ENCODE measurements at regions of chr1 and their contacts with region 1.

Region 1: GRCh38 chr1:153990468-153991150 is at the start of gene RPS27:
- DNase-seq: peak; percentile 84
- ATAC-seq: peak; percentile 83
- H3K4me3 Mint-ChIP-seq: peak within 1 kb of the TSS; percentile 93
- H3K27ac Mint-ChIP-seq: peak within 1 kb of the TSS; percentile 98
- H3K4me1 Mint-ChIP-seq: peaks cover 39% of the 10 kb centered on the region
- H3K27me3 Mint-ChIP-seq: no peaks in the 10 kb centered on the region
- total RNA-seq, gene RPS27: 3,346 to 3,734 TPM

Region 2: DNA sequence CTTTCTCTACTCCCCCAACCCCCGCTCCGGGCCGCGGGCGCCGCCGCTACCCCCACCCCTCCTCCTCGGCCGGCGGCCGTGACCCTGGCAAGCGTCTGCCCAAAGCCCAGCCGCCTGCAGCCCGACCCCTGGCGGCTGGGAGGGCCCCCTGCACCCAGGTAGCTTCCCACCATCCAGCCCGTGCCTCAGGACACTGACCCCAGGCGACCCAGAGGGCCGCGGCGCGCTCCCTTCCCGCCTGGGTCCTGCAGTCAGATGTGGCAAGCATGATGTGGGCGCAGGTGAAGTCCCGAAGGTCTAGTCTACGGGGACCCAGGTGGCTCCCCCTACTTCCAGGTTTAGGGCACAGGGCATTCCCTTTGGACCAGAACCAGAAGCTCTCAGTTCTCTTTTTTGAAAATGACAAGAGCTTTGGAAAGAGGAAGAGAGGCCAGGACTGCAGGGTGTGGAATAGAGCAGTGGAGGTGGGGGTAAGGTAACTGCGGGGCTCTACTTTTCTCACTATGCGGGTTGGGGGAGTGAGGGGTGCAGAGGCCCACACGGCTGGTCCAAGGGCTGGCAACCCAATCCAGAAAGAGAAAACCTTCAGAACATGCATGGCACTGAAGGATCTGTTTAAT is 43.9 kb before region 1 on chr1 and contains the start of gene DENND4B:
- POLR2A ChIA-PET with region 1: interaction called, 18 read pairs
- DNase-seq: no peak
- ATAC-seq: peak; percentile 58
- H3K4me3 Mint-ChIP-seq: peak within 1 kb of the TSS; percentile 95
- H3K27ac Mint-ChIP-seq: peak within 1 kb of the TSS; percentile 96
- H3K4me1 Mint-ChIP-seq: peaks cover 32% of the 10 kb centered on the region
- H3K27me3 Mint-ChIP-seq: no peaks in the 10 kb centered on the region
- total RNA-seq, gene DENND4B: 173 to 183 TPM

Region 3: DNA sequence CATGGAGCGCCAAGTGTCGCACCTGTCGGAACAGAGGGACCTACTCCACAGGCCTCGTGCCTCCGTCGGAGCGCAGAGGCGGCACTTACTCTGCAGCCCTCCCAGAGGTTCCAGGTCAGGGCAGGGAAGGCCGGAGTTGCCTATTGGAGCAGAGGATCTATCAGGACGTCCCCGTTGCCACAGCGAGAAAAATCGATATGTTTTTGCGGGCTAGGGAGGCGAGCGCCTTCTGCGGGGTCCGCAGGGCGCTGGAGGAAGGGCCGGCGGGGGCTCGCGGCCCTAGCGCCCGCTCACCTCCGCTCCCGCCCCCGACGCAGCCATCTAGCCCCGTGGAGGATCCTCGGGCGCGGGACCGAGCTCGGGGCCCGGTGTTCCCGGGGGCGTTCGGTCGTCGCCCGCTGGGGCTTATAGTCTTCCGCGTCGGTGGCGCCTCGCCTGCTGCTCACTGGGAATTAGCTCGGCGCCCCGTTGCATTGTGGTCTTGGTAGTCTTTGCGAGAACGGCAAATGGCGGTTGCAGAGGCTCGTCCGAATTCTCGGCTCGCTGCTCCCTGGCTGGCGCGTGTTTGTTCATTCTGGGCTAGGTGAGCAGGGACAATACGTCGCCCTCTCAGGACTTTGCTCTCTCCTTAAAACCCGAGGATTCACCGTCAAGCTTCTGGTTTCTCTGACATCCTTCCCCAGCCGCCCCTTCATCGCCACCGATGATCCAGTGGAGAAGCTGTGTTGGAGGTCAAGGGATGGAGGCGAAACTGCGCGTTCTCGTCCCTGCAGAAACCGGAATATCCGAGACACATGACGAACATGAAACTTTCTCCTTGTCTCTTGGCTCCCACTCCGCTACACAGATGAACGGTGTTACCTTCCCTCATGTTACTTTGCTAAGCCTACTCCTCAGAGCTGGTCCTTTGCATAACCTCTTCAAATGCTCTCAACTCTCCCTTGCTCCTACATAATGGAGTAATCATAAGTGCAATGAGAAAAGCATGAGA is 13.1 kb before region 1 on chr1 and contains the start of gene JTB:
- POLR2A ChIA-PET with region 1: interaction called, 24 read pairs
- DNase-seq: peak; percentile 80
- ATAC-seq: peak; percentile 93
- H3K4me3 Mint-ChIP-seq: peak within 1 kb of the TSS; percentile 97
- H3K27ac Mint-ChIP-seq: peak within 1 kb of the TSS; percentile 93
- H3K4me1 Mint-ChIP-seq: peaks cover 42% of the 10 kb centered on the region
- H3K27me3 Mint-ChIP-seq: no peaks in the 10 kb centered on the region
- total RNA-seq, gene JTB: 118 TPM

Region 4: GRCh38 chr1:154097873-154098272 is 107.3 kb after region 1 on chr1:
- POLR2A ChIA-PET with region 1: no interaction called
- DNase-seq: no peak
- ATAC-seq: no peak
- H3K4me3 Mint-ChIP-seq: no peak overlapping the region
- H3K27ac Mint-ChIP-seq: no peak overlapping the region
- H3K4me1 Mint-ChIP-seq: no peaks in the 10 kb centered on the region
- H3K27me3 Mint-ChIP-seq: no peaks in the 10 kb centered on the region

Region 5: DNA sequence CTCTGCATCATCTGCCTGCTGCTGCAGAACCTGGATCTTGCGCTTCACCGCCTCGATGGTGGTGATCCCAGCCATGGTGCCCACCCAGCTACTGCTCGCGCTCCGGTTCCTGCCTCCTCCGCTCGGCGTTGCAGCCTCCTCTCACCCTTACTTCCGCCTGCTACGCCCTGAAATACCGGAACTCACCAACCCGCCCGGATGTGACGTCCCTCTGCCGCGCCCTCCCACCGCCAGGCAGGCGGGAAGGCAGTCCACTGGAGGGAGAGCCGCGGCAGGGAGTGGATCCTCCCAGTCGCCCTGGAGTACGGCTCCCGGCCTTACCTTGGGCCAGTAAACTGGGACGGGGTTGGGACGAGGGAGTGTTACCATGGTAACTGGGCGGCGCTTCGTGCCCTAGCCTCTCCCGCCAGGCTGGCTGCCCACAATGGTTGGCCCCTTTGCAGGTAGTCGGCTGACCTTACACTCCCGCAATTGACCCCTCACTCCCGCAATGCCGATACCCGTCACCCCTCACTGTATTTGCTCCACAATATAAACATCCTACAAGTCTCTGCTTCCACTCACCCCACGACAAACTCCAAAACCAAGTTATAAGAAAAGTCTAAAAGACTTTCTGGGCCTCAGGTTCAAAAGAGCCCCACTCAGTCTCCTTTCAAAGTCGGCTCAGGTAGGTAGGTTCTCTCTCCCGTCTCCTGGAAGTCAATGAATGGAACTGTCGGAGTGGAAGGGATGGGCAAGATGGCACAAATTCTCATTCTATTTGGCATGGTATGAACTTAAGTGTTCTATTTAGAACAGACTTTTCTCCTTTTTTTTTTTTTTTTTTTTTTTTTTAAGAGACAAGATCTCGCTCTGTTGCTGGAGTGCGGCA is 192.7 kb after region 1 on chr1:
- POLR2A ChIA-PET with region 1: interaction called, 21 read pairs
- DNase-seq: peak; percentile 95
- ATAC-seq: peak; percentile 62
- H3K4me3 Mint-ChIP-seq: peak overlapping the region; percentile 99
- H3K27ac Mint-ChIP-seq: peak overlapping the region; percentile 100
- H3K4me1 Mint-ChIP-seq: peaks cover 39% of the 10 kb centered on the region
- H3K27me3 Mint-ChIP-seq: no peaks in the 10 kb centered on the region

Measured in activated naive CD8-positive, alpha-beta T cell treated with anti-CD3 and anti-CD28 coated beads, Interleukin-2, amount 10 ng/mL, durations not matched to agents 7 days and 5 days (primary cell).